ENCODE measurements at regions of chr6 and their contacts with region 1.

Region 1: DNA sequence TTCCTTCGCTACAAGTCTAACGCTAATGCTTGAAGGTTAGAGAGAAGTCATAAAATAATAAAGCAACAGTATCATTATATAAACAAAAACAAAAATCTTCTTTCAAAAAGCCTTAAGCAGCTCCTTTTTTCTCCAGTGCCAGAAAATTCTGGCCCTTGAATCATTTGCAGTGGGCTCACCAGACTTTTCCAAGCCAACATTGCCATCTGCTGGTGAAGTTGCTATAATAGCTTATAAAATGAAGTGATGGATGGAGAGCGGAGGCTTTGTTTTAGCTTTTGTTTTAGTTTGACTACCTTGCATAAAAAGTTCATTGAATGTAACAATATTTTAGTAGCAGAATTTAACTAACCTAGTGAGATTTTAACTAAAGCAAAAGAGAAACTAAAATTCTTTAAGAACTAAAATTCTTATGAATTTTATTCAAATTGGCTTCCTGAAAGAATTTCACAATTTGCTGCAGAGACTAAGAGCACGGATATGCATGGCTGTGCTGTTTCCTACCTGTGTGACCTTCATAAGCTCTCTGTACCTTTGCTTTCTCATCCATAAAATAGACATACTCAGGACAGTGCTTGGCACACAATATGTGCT is 44.8 kb upstream of the SLC2A12 start:
- DNase-seq: peak; percentile 79
- H3K4me3 Mint-ChIP-seq: no peak overlapping the region
- H3K27ac Mint-ChIP-seq: no peak overlapping the region
- H3K4me1 Mint-ChIP-seq: peaks cover 5% of the 10 kb centered on the region
- H3K27me3 Mint-ChIP-seq: peaks cover 28% of the 10 kb centered on the region

Region 2: GRCh38 chr6:133923938-133924593 is 173.1 kb before region 1 on chr6:
- CTCF ChIA-PET with region 1: interaction called, 39 read pairs
- POLR2A ChIA-PET with region 1: interaction called, 5 read pairs
- DNase-seq: peak; percentile 70
- H3K4me3 Mint-ChIP-seq: no peak overlapping the region
- H3K27ac Mint-ChIP-seq: no peak overlapping the region
- H3K4me1 Mint-ChIP-seq: no peaks in the 10 kb centered on the region
- H3K27me3 Mint-ChIP-seq: peaks cover 44% of the 10 kb centered on the region

Region 3: DNA sequence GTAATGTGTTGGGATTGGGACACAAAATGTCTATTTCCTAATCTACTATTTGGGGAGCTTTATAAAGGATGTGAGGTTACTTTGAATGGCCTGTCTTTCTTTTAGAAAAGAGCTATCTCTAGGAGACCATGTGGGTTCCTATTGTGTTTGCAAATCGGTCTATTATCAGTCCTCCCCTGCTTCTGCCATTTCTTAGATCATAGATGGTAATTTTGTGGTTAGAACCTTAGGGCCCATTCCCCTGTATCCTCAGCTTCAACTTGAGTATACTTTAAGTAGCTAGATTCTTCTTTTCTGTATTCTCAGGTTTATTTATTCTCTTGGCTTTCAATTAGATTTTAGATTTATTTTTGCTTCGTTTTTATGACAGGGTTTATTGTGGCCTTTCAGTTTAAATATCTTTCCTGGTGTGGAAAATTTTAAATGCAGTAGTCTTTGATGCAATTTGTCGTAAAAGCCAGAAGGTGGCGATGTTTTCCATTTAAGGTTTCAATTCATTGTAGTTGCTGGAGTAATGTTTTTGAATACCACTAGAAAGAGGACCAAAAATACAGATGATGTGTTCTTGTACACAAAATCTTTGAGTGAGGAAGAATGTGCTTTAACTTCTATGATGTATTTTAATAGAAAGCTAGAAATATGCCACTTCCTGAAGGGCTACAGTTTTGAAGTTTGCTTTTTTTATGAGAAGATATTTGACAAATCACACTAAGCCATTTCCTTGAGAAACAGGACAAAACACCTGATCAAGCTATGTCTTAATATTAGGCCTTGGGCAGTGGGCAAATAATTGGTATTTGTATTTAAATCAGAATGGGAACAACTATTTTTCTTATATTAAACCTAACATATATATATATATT is 123.9 kb before region 1 on chr6:
- CTCF ChIA-PET with region 1: interaction called, 11 read pairs
- POLR2A ChIA-PET with region 1: no interaction called
- DNase-seq: peak; percentile 25
- H3K4me3 Mint-ChIP-seq: no peak overlapping the region
- H3K27ac Mint-ChIP-seq: no peak overlapping the region
- H3K4me1 Mint-ChIP-seq: peaks cover 19% of the 10 kb centered on the region
- H3K27me3 Mint-ChIP-seq: no peaks in the 10 kb centered on the region

Region 4: DNA sequence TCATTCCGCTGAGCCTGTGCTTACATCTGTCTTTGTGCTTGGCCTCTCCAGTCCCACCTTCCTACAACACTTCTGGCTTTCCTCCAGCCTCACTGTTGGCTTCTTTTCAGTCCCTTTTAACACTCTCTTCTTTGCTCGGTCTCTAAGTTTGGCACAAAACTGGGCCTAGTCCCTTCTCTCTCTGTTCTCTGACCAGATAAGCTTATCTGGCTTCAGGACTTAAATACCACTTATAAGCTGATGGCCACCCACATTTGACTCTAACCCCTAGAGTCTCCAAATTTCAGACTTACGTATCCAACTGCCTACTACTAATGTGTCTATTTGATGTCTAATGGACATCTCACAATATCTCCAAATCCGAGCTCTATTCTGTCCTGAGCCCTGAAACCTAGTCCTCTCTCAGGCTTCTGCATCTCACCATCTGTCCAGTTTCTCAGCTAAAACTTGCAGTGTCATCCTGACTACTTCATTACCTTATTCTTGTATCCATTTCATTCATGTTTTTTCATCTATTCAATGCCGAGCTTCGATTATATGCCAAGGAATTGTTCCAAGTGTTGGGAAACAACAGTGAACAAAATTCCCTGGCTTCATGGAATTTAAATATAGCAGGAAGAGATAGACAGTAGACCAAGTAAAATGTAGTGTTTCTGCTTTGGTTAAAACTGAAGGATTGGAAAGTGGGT is 104.1 kb before region 1 on chr6:
- CTCF ChIA-PET with region 1: no interaction called
- POLR2A ChIA-PET with region 1: no interaction called
- DNase-seq: no peak
- H3K4me3 Mint-ChIP-seq: no peak overlapping the region
- H3K27ac Mint-ChIP-seq: no peak overlapping the region
- H3K4me1 Mint-ChIP-seq: no peaks in the 10 kb centered on the region
- H3K27me3 Mint-ChIP-seq: no peaks in the 10 kb centered on the region